ENCODE measurements at regions of chr22 and their contacts with region 1.

Region 1: DNA sequence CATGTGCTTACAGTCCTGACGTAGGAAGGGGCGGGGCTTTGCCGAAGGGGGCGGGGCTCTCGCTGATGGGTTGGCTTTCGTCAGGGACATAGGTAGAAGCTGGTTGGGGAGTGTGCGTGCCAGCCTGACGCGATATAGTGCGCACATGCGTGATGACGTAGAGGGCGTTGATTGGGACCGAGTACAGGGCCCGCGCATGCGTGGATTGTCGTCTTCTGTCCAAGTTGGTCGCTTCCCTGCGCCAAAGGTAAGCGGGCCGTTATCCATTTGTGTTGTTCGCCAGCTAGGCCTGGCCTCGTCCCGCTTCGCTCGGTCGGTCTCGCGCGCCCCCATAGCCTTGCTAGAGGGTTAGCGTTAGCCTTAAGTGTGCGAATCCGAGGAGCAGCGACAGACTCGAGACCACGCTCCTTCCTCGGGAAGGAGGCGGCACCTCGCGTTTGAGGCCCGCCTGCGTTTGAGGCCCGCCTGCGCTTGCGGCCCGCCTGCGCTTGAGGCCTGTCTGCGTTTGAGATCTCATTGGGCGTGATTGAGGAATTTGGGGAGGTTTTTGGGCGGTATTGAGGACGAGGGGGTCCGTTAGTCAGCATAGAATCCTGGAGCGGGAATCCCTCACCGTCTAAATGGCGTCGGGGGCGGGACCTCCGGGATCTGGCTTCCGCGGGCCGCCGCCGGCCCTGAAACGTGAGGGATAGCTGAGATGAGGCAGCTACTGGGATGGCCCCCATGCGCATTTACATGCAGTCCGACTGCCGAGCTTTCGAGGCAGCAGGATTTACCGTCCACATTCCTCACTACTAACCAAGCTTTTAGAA is at the start of gene XRCC6:
- DNase-seq: peak; percentile 97 to 100 (median 99)
- ATAC-seq: peak; percentile 97
- H3K4me3 ChIP-seq: peak within 1 kb of the TSS; percentile 99
- H3K4me3 Mint-ChIP-seq: peak within 1 kb of the TSS; percentile 93 to 99 (median 97)
- H3K27ac ChIP-seq: peak within 1 kb of the TSS; percentile 99
- H3K27ac Mint-ChIP-seq: peak within 1 kb of the TSS; percentile 95 to 100 (median 99)
- H3K4me1 ChIP-seq: peaks cover 18 to 20% of the 10 kb centered on the region in 2 donors
- H3K4me1 Mint-ChIP-seq: peaks cover 22 to 63% (median 44%) of the 10 kb centered on the region in 7 donors
- H3K27me3 ChIP-seq: no peaks in the 10 kb centered on the region
- H3K27me3 Mint-ChIP-seq: peaks cover 0 to 3% (median 0%) of the 10 kb centered on the region in 5 donors
- total RNA-seq, gene XRCC6: 139 to 270 (median 160) TPM

Region 2: GRCh38 chr22:40818747-40819598 is 802.3 kb before region 1 on chr22 and contains the start of gene SLC25A17:
- CTCF ChIA-PET with region 1: no interaction called
- POLR2A ChIA-PET with region 1: no interaction called
- intact Hi-C with region 1: loop called in 1 of 2 experiments (anchors 1 kb)
- DNase-seq: peak; percentile 71 to 88 (median 82)
- ATAC-seq: peak; percentile 95
- H3K4me3 ChIP-seq: peak within 1 kb of the TSS; percentile 100
- H3K4me3 Mint-ChIP-seq: peak within 1 kb of the TSS; percentile 79 to 99 (median 93)
- H3K27ac ChIP-seq: peak within 1 kb of the TSS; percentile 86
- H3K27ac Mint-ChIP-seq: peak within 1 kb of the TSS; percentile 57 to 96 (median 88)
- H3K4me1 ChIP-seq: peaks cover 9 to 26% of the 10 kb centered on the region in 2 donors
- H3K4me1 Mint-ChIP-seq: peaks cover 22 to 42% (median 37%) of the 10 kb centered on the region in 7 donors
- H3K27me3 ChIP-seq: no peaks in the 10 kb centered on the region
- H3K27me3 Mint-ChIP-seq: no peaks in the 10 kb centered on the region
- total RNA-seq, gene SLC25A17: 6.8 to 22.1 (median 13.1) TPM

Region 3: GRCh38 chr22:41204992-41205900 is 416.1 kb before region 1 on chr22 and contains the start of gene L3MBTL2:
- CTCF ChIA-PET with region 1: no interaction called
- POLR2A ChIA-PET with region 1: no interaction called
- intact Hi-C with region 1: loop called in 1 of 2 experiments (anchors 5 kb)
- DNase-seq: peak; percentile 89 to 99 (median 97)
- ATAC-seq: peak; percentile 100
- H3K4me3 ChIP-seq: peak within 1 kb of the TSS; percentile 94
- H3K4me3 Mint-ChIP-seq: peak within 1 kb of the TSS; percentile 87 to 100 (median 96)
- H3K27ac ChIP-seq: peak within 1 kb of the TSS; percentile 85
- H3K27ac Mint-ChIP-seq: peak within 1 kb of the TSS; percentile 88 to 98 (median 92)
- H3K4me1 ChIP-seq: peaks cover 4 to 10% of the 10 kb centered on the region in 2 donors
- H3K4me1 Mint-ChIP-seq: peaks cover 10 to 40% (median 36%) of the 10 kb centered on the region in 7 donors
- H3K27me3 ChIP-seq: no peaks in the 10 kb centered on the region
- H3K27me3 Mint-ChIP-seq: peaks cover 0 to 26% (median 0%) of the 10 kb centered on the region in 5 donors
- total RNA-seq, gene L3MBTL2: 31.6 to 45.9 (median 43.3) TPM

Region 4: DNA sequence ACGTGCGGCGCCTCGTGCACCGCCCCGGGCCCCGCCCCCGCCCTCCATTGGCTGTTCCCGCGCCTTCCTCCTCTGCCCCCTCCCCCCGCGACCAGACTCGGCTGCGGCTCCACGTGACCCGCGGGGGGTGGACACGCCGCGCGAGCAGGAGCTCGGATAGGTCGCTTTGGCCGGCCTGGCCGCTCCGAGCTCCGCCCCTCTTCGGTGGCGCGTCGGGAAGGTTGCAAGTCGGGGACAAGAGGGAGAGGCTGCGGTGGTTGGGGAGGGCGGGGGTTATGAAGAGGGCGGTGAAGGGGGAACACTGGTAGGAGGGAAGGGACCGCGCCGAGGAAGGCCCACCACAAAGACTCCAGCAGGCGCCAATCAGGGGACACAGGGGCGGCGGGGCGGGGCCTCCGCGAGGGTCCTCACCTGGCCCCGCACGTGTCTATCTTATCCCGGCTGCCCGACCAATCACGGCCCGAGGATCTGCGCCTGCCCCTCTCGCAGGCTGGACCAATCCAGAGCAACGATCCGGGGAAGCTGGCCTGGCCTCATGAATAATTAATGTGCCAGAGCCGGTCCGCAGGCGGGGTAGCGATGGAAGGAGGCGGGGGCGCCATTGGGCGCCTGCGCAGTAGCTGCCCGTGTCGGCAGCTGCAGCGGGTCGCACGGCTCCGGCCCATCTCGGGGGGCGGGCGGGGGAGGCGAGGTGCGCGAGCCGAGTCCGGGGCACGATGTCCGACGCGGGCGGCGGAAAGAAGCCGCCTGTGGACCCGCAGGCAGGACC is 239.8 kb before region 1 on chr22 and contains the start of gene TEF:
- CTCF ChIA-PET with region 1: no interaction called
- POLR2A ChIA-PET with region 1: no interaction called
- intact Hi-C with region 1: loop called (anchors 1 kb)
- DNase-seq: peak; percentile 97 to 99 (median 98)
- ATAC-seq: peak; percentile 89
- H3K4me3 ChIP-seq: peak within 1 kb of the TSS; percentile 86
- H3K4me3 Mint-ChIP-seq: peak within 1 kb of the TSS; percentile 90 to 97 (median 94)
- H3K27ac ChIP-seq: peak within 1 kb of the TSS; percentile 95
- H3K27ac Mint-ChIP-seq: peak within 1 kb of the TSS; percentile 94 to 99 (median 98)
- H3K4me1 ChIP-seq: peaks cover 5 to 14% of the 10 kb centered on the region in 2 donors
- H3K4me1 Mint-ChIP-seq: peaks cover 5 to 29% (median 19%) of the 10 kb centered on the region in 7 donors
- H3K27me3 ChIP-seq: no peaks in the 10 kb centered on the region
- H3K27me3 Mint-ChIP-seq: peaks cover 0 to 5% (median 0%) of the 10 kb centered on the region in 5 donors
- total RNA-seq, gene TEF: 3.8 to 8.4 (median 6.2) TPM

Region 5: GRCh38 chr22:41543854-41544670 is 77.2 kb before region 1 on chr22 and contains the start of gene POLR3H:
- CTCF ChIA-PET with region 1: no interaction called
- POLR2A ChIA-PET with region 1: interaction called, 3 read pairs
- intact Hi-C with region 1: loop called (anchors 1 kb)
- DNase-seq: peak; percentile 89 to 97 (median 95)
- ATAC-seq: peak; percentile 100
- H3K4me3 ChIP-seq: peak within 1 kb of the TSS; percentile 96
- H3K4me3 Mint-ChIP-seq: peak within 1 kb of the TSS; percentile 82 to 100 (median 97)
- H3K27ac ChIP-seq: peak within 1 kb of the TSS; percentile 84
- H3K27ac Mint-ChIP-seq: peak within 1 kb of the TSS; percentile 88 to 98 (median 95)
- H3K4me1 ChIP-seq: peaks cover 7 to 15% of the 10 kb centered on the region in 2 donors
- H3K4me1 Mint-ChIP-seq: peaks cover 30 to 52% (median 45%) of the 10 kb centered on the region in 7 donors
- H3K27me3 ChIP-seq: no peaks in the 10 kb centered on the region
- H3K27me3 Mint-ChIP-seq: no peaks in the 10 kb centered on the region
- total RNA-seq, gene POLR3H: 21.7 to 59.6 (median 28.5) TPM

Region 6: GRCh38 chr22:41603873-41604332 is 17.4 kb before region 1 on chr22:
- CTCF ChIA-PET with region 1: no interaction called
- POLR2A ChIA-PET with region 1: interaction called, 4 read pairs
- intact Hi-C with region 1: loop called in 1 of 2 experiments (anchors 1 kb)
- DNase-seq: peak in 8 of 9 donors; percentile 12 to 68 (median 36)
- ATAC-seq: peak; percentile 96
- H3K4me3 ChIP-seq: no peak overlapping the region
- H3K4me3 Mint-ChIP-seq: peak overlapping the region in 1 of 10 donors; percentile 17
- H3K27ac ChIP-seq: no peak overlapping the region
- H3K27ac Mint-ChIP-seq: peak overlapping the region in 8 of 9 donors; percentile 18 to 73 (median 47)
- H3K4me1 ChIP-seq: peaks cover 0 to 19% of the 10 kb centered on the region in 2 donors
- H3K4me1 Mint-ChIP-seq: peaks cover 13 to 37% (median 21%) of the 10 kb centered on the region in 7 donors
- H3K27me3 ChIP-seq: no peaks in the 10 kb centered on the region
- H3K27me3 Mint-ChIP-seq: peaks cover 0 to 11% (median 0%) of the 10 kb centered on the region in 5 donors

Region 7: DNA sequence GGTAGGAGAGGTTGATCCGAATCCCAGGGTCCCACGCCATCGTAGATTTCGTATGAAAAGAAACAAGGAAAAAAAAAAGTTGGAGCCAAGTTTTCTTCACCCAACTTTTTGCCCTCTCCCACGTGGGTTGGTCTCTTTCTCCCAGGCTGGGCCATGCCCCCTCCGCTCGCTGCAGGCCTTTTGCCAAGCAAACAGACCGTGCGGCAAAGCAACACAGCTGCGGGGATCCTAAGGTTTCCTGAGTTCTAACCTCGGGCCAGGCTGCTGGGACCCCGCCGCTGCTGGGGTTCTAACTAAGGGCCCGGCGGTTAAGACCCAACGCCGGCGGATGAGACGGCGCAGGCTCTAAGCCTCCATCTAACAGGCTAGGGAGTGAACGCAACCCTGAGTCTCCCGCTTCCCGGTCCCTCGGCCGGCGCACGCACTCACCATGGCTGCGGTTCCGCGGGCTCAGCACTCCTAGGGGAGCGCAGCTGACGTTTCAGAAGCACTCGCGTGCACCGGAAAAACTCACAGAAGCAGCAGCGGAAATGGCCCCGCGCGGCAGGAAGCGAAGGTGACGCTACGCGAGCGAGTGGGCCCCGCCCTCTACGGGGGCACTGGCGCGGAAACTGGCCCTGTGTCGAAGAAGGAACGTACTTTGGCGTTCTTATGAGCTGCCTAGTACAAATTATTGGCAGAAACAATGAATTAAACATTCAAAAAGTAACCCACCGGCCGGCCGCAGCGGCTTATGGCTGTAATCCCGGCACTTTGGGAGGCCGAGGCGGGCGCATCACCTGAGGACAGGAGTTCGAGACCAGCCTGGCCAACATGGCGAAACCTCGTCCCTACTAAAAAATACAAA is 67.3 kb after region 1 on chr22 and contains the start of gene SNU13:
- CTCF ChIA-PET with region 1: no interaction called
- POLR2A ChIA-PET with region 1: interaction called, 6 read pairs
- intact Hi-C with region 1: loop called (anchors 1 to 2 kb)
- DNase-seq: peak; percentile 79 to 94 (median 92)
- ATAC-seq: peak; percentile 97
- H3K4me3 ChIP-seq: peak within 1 kb of the TSS; percentile 98
- H3K4me3 Mint-ChIP-seq: peak within 1 kb of the TSS; percentile 90 to 100 (median 96)
- H3K27ac ChIP-seq: peak within 1 kb of the TSS; percentile 95
- H3K27ac Mint-ChIP-seq: peak within 1 kb of the TSS; percentile 94 to 100 (median 99)
- H3K4me1 ChIP-seq: peaks cover 12 to 13% of the 10 kb centered on the region in 2 donors
- H3K4me1 Mint-ChIP-seq: peaks cover 18 to 51% (median 37%) of the 10 kb centered on the region in 7 donors
- H3K27me3 ChIP-seq: no peaks in the 10 kb centered on the region
- H3K27me3 Mint-ChIP-seq: no peaks in the 10 kb centered on the region
- total RNA-seq, gene SNU13: 117 to 180 (median 122) TPM

Measured in naive thymus-derived CD4-positive, alpha-beta T cell (primary cell).